Cardiac septum (tissue), 1 donor: ENCODE measurements at regions of chr4 and their contacts with region 1.

Region 1: GRCh38 chr4:26992657-26993361 is 132.2 kb downstream of the STIM2 start:
- DNase-seq: no peak

Region 2: GRCh38 chr4:26583865-26584652 is 408.8 kb before region 1 on chr4 and contains the start of gene TBC1D19:
- intact Hi-C with region 1: loop called (anchors 10 kb)
- DNase-seq: peak; percentile 93
- total RNA-seq, gene TBC1D19: 8.9 TPM

Region 3: DNA sequence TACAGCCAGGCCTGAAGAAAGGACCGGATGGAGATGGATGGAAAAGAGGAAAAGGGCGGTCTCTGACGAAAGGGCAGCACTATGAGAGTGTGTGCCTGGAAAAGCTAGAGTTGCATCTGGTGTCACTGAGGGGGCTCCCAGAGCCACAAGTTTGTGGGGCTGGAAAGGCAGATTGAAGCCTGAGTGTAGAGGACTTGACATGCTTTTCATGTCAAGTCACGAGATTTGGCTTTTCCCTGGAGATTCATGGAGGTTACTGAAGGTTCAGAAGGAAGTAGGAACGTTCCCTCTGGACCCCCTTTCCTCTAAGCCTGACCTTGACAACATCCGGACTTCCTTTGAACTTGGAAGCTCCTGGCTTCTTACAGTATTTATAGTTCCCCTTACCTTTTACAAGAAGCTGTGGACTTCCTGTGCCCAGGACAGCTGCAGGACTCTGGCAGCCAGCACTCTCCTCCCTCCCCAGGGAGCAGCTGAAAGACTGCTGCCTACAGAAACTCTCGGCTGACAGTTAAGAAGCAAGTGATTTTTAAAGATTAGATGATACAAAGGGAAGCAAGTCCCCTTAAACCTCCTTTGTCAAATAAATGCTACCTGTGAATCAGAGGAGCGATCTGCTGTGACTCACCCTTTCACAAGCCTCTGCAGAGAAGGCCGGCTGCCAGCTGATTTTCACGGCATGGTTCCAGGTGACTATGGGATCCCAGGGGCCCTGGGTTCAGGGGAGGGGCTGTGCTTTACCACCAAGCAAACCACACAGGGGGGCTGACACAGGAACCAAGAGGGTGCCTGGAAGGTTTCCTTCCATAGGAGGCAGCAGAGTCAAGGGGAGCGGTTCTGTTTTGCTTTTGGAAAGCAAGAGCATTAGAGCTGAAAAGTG is 205.1 kb before region 1 on chr4:
- intact Hi-C with region 1: loop called (anchors 10 kb)
- DNase-seq: no peak

Region 4: GRCh38 chr4:26916195-26916594 is 76.6 kb before region 1 on chr4:
- intact Hi-C with region 1: no loop called
- DNase-seq: no peak